Activated T-helper 2 cell treated with anti-CD3 and anti-CD28 coated beads, Interferon-gamma antibody, Interleukin-2, Interleukin-4, amounts not matched to agents 10 μg/mL and 5 μg/mL and 100 μg/mL, durations not matched to agents 14 hours and 24 hours and 36 hours (primary cell): ENCODE measurements at regions of chr7 and their contacts with region 1.

Region 1: GRCh38 chr7:142385491-142386340 is 127.9 kb upstream of the PRSS58 start:
- DNase-seq: peak; percentile 24
- H3K4me3 Mint-ChIP-seq: peak overlapping the region; percentile 55
- H3K27ac Mint-ChIP-seq: peak overlapping the region; percentile 38
- H3K4me1 Mint-ChIP-seq: peaks cover 25% of the 10 kb centered on the region
- H3K27me3 Mint-ChIP-seq: peaks cover 1% of the 10 kb centered on the region

Region 2: DNA sequence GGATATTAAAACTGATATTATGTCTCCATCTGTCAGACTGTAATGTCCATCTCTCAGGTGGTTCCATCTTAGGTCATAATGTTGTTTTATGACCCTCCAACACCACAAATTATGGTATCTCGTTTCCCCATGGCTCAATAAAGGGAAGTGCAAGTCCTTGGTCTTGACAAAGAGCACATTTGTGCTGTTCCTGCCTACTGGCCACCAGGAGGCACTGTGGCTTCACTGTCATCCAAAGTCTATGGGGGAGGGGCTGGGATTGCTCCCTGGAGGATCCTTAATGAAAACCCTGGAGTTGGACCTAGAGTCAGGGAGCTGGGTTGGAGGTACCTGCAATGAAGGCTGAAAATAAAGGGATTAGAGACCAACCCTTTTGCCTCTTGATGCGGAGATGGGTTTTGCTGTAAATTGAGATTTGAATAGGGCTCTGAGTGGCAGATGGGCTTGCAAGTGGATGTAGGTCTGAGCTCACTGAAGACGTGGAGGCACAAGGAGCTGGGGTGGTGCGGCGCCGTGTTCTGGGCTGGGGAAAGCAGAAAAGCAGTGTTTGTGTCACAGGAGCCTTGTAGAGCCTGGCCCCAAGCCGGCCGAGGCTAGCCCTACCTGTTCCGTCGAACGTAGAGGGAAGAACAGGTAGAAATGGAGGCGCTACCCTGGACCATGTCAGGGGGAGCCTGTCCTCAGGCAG is 52.7 kb after region 1 on chr7:
- intact Hi-C with region 1: loop called (anchors 2 kb)
- DNase-seq: no peak
- H3K4me3 Mint-ChIP-seq: no peak overlapping the region
- H3K27ac Mint-ChIP-seq: no peak overlapping the region
- H3K4me1 Mint-ChIP-seq: peaks cover 53% of the 10 kb centered on the region
- H3K27me3 Mint-ChIP-seq: peaks cover 2% of the 10 kb centered on the region